ENCODE measurements at regions of chr11 and their contacts with region 1.

Region 1: DNA sequence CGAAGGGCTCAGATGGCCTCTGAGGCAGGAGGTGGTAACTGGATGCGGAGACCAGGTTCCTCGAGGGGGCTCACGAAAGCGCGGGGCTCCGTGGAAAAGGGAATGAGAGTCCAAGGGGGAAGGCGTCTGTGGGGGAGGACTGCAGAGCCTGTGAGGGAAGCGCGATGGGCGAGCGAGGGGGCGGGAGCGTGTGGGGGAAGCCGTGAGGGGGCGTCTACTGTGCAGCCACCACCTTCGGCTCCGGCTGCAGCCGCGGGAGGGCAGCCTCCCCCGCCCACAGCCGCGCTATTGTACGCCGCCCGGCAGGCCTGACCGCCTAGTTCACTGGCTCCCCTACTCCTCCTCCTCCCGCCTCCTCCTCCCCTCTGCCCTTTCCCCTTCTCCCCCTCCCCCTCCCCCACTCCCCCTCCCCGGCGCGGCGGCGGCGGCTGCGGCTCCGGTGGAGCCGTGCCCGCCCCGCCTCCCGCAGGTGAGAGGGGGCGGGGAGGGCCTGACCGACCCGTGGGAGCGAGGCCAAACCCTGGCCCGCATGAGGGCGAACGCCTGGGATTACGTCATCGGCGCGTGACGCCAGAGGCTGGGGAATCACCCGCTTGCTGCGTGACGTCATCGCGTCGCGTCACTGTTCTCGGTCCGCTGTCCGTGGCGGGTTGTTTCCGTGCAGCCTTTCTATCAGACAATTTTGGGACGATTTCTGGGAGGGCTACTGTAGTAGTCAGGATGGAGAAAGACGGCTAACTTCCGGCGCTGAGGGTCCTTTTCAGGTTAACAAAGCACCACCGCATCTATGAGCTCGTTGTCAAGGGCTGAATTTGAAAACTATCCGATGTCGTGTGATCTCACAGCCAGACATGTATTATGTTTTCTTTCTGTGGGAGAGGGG is at the start of gene PAK1:
- DNase-seq: peak; percentile 63 to 99 (median 87)
- ATAC-seq: peak; percentile 73
- H3K4me3 ChIP-seq: peak within 1 kb of the TSS; percentile 56 to 58
- H3K4me3 Mint-ChIP-seq: peak within 1 kb of the TSS; percentile 88
- H3K27ac ChIP-seq: peak within 1 kb of the TSS; percentile 49 to 69
- H3K27ac Mint-ChIP-seq: peak within 1 kb of the TSS; percentile 97
- H3K4me1 ChIP-seq: peaks cover 11% of the 10 kb centered on the region
- H3K4me1 Mint-ChIP-seq: peaks cover 30% of the 10 kb centered on the region
- H3K27me3 ChIP-seq: no peaks in the 10 kb centered on the region
- H3K27me3 Mint-ChIP-seq: peaks cover 4% of the 10 kb centered on the region
- CTCF ChIP-seq: no peak
- total RNA-seq, gene PAK1: 16.9 to 18.7 TPM

Region 2: GRCh38 chr11:76700177-76701100 is 773.6 kb before region 1 on chr11:
- CTCF ChIA-PET with region 1: no interaction called
- POLR2A ChIA-PET with region 1: no interaction called
- intact Hi-C with region 1: no loop called
- DNase-seq: no peak
- ATAC-seq: no peak
- H3K4me3 ChIP-seq: no peak overlapping the region
- H3K4me3 Mint-ChIP-seq: no peak overlapping the region
- H3K27ac ChIP-seq: no peak overlapping the region
- H3K27ac Mint-ChIP-seq: no peak overlapping the region
- H3K4me1 ChIP-seq: no peaks in the 10 kb centered on the region
- H3K4me1 Mint-ChIP-seq: no peaks in the 10 kb centered on the region
- H3K27me3 ChIP-seq: no peaks in the 10 kb centered on the region
- H3K27me3 Mint-ChIP-seq: peaks cover 3% of the 10 kb centered on the region
- CTCF ChIP-seq: no peak

Region 3: DNA sequence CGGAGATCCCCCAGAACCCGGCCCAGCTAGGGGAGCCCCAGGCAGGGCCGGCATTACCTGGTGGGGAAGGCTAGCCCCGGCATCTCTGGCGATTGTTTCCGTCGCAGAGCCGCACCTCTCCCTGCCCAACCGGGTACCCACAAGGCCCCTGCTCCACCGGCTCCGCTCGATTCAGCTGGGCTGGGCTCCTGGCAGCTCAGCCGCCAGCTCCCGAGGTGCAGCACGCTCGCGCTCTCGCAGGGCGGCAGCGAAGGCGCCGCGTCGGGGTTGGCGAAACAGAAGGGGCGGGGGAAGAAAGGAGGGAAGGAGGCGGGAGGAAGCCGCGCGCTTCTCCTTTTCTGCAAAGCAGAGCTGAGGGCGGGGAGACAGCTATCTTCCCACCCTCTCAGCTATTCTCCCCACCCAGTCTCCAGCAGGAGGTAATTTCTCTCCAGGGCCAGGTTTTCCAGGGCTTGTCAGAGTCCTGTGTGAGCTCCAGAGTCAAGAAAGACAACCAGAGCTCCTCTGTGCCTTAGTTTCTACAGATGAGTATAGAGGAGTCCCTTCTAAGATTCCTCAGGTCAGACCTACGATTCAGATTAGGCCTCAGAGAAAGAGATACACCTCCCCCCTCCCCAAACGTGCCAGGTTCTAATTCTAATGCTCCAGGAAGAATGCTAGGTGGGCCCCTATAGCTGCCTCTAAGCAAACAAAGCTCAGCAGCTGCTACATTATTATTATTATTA is 62.2 kb before region 1 on chr11:
- CTCF ChIA-PET with region 1: no interaction called
- POLR2A ChIA-PET with region 1: no interaction called
- intact Hi-C with region 1: loop called (anchors 1 to 2 kb)
- DNase-seq: peak; percentile 58 to 88 (median 80)
- ATAC-seq: peak; percentile 97
- H3K4me3 ChIP-seq: peak overlapping the region; percentile 47 to 71
- H3K4me3 Mint-ChIP-seq: peak overlapping the region; percentile 94
- H3K27ac ChIP-seq: peak overlapping the region; percentile 35 to 55
- H3K27ac Mint-ChIP-seq: peak overlapping the region; percentile 86
- H3K4me1 ChIP-seq: peaks cover 25% of the 10 kb centered on the region
- H3K4me1 Mint-ChIP-seq: peaks cover 44% of the 10 kb centered on the region
- H3K27me3 ChIP-seq: no peaks in the 10 kb centered on the region
- H3K27me3 Mint-ChIP-seq: no peaks in the 10 kb centered on the region
- CTCF ChIP-seq: no peak

Region 4: GRCh38 chr11:77424644-77425043 is 49.4 kb before region 1 on chr11:
- CTCF ChIA-PET with region 1: no interaction called
- POLR2A ChIA-PET with region 1: no interaction called
- intact Hi-C with region 1: no loop called
- DNase-seq: no peak
- ATAC-seq: no peak
- H3K4me3 ChIP-seq: no peak overlapping the region
- H3K4me3 Mint-ChIP-seq: no peak overlapping the region
- H3K27ac ChIP-seq: no peak overlapping the region
- H3K27ac Mint-ChIP-seq: no peak overlapping the region
- H3K4me1 ChIP-seq: no peaks in the 10 kb centered on the region
- H3K4me1 Mint-ChIP-seq: no peaks in the 10 kb centered on the region
- H3K27me3 ChIP-seq: no peaks in the 10 kb centered on the region
- H3K27me3 Mint-ChIP-seq: peaks cover 8% of the 10 kb centered on the region
- CTCF ChIP-seq: no peak

Region 5: GRCh38 chr11:77547863-77548551 is 74.0 kb after region 1 on chr11:
- CTCF ChIA-PET with region 1: interaction called, 4 read pairs
- POLR2A ChIA-PET with region 1: no interaction called
- intact Hi-C with region 1: loop called in 1 of 2 experiments (anchors 2 kb)
- DNase-seq: peak in 6 of 9 experiments; percentile 4 to 74 (median 34)
- ATAC-seq: no peak
- H3K4me3 ChIP-seq: no peak overlapping the region
- H3K4me3 Mint-ChIP-seq: no peak overlapping the region
- H3K27ac ChIP-seq: no peak overlapping the region
- H3K27ac Mint-ChIP-seq: no peak overlapping the region
- H3K4me1 ChIP-seq: no peaks in the 10 kb centered on the region
- H3K4me1 Mint-ChIP-seq: peaks cover 6% of the 10 kb centered on the region
- H3K27me3 ChIP-seq: no peaks in the 10 kb centered on the region
- H3K27me3 Mint-ChIP-seq: no peaks in the 10 kb centered on the region
- CTCF ChIP-seq: peak; percentile 66

Region 6: GRCh38 chr11:77619576-77620198 is 145.6 kb after region 1 on chr11:
- CTCF ChIA-PET with region 1: no interaction called
- POLR2A ChIA-PET with region 1: no interaction called
- intact Hi-C with region 1: loop called in 1 of 2 experiments (anchors 10 kb)
- DNase-seq: peak in 3 of 9 experiments; percentile 34 to 66 (median 54)
- ATAC-seq: no peak
- H3K4me3 ChIP-seq: no peak overlapping the region
- H3K4me3 Mint-ChIP-seq: no peak overlapping the region
- H3K27ac ChIP-seq: no peak overlapping the region
- H3K27ac Mint-ChIP-seq: no peak overlapping the region
- H3K4me1 ChIP-seq: no peaks in the 10 kb centered on the region
- H3K4me1 Mint-ChIP-seq: no peaks in the 10 kb centered on the region
- H3K27me3 ChIP-seq: no peaks in the 10 kb centered on the region
- H3K27me3 Mint-ChIP-seq: no peaks in the 10 kb centered on the region
- CTCF ChIP-seq: peak; percentile 77

Region 7: GRCh38 chr11:77637345-77638165 is 163.5 kb after region 1 on chr11 and contains the start of gene CLNS1A:
- CTCF ChIA-PET with region 1: no interaction called
- POLR2A ChIA-PET with region 1: no interaction called
- intact Hi-C with region 1: loop called (anchors 5 kb)
- DNase-seq: peak; percentile 51 to 88 (median 81)
- ATAC-seq: peak; percentile 99
- H3K4me3 ChIP-seq: peak within 1 kb of the TSS; percentile 88 to 91
- H3K4me3 Mint-ChIP-seq: peak within 1 kb of the TSS; percentile 95
- H3K27ac ChIP-seq: peak within 1 kb of the TSS; percentile 62 to 80
- H3K27ac Mint-ChIP-seq: peak within 1 kb of the TSS; percentile 97
- H3K4me1 ChIP-seq: peaks cover 26% of the 10 kb centered on the region
- H3K4me1 Mint-ChIP-seq: peaks cover 43% of the 10 kb centered on the region
- H3K27me3 ChIP-seq: no peaks in the 10 kb centered on the region
- H3K27me3 Mint-ChIP-seq: no peaks in the 10 kb centered on the region
- CTCF ChIP-seq: no peak
- total RNA-seq, gene CLNS1A: 84.6 to 87.5 TPM

Region 8: GRCh38 chr11:78574386-78575381 is 1100.6 kb after region 1 on chr11 and contains the start of gene NARS2:
- CTCF ChIA-PET with region 1: no interaction called
- POLR2A ChIA-PET with region 1: no interaction called
- intact Hi-C with region 1: loop called in 1 of 2 experiments (anchors 10 kb)
- DNase-seq: peak; percentile 94 to 99 (median 98)
- ATAC-seq: peak; percentile 98
- H3K4me3 ChIP-seq: peak within 1 kb of the TSS; percentile 73 to 95
- H3K4me3 Mint-ChIP-seq: peak within 1 kb of the TSS; percentile 94
- H3K27ac ChIP-seq: peak within 1 kb of the TSS; percentile 77 to 88
- H3K27ac Mint-ChIP-seq: peak within 1 kb of the TSS; percentile 99
- H3K4me1 ChIP-seq: peaks cover 16% of the 10 kb centered on the region
- H3K4me1 Mint-ChIP-seq: peaks cover 39% of the 10 kb centered on the region
- H3K27me3 ChIP-seq: no peaks in the 10 kb centered on the region
- H3K27me3 Mint-ChIP-seq: peaks cover 4% of the 10 kb centered on the region
- CTCF ChIP-seq: no peak
- total RNA-seq, gene NARS2: 6.3 to 8.3 TPM

Measured in CD8-positive, alpha-beta T cell (primary cell).